ENCODE measurements at regions of chr10 and their contacts with region 1.

Region 1: DNA sequence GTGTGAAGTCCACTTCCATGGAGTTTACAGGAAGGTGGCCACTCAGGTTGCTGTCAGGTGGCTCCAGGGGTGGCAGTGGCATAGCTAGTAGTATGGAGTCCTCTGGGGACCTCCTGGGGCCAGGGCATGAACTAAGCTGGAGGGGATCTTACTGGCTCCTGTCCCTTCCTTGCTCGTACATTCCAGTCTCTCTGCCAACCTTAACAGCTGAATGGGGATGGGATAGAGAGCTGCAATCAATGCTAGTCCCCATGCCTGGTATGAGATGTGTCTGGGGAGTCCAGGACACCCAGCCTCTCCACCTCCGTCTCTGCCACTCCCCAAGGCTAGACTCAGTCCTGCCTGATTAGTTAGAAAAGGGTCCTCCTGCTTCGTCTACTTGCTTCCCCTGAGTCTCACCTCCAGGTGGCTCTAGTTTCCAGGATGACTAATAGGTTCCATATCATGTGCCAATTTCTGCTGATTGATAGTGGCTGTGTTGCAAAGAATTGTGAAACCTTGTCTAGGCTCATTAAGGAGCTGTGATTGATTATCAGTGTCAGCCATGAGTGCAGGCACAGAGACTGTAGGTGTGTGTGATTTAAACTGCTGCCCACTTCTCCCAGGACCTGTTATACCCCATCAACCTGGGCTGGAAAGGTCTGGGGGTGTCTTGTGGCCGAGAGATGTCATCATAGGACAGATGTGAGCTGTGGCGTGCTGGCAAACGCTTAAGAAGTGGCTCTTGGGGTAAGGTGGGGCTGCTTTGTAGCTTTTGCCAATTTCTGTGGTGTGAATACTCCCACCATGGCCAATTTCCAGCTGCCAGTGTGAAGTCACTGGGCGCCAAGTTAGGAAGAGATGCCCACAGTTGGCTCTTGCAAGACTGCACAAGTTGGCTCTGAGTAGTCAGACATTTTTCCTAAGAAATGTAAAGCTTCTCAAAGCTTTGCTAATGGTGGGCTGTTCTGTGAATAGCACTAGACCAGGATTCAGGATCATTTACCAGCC is 59.8 kb downstream of the COL13A1 start:
- DNase-seq: no peak
- H3K4me3 ChIP-seq: no peak overlapping the region
- H3K27ac ChIP-seq: no peak overlapping the region
- H3K4me1 ChIP-seq: no peaks in the 10 kb centered on the region
- H3K27me3 ChIP-seq: no peaks in the 10 kb centered on the region
- CTCF ChIP-seq: peak in 1 of 3 donors; percentile 14
- POLR2A ChIP-seq: no peak

Region 2: GRCh38 chr10:69682955-69683474 is 178.5 kb before region 1 on chr10:
- intact Hi-C with region 1: loop called (anchors 2 kb)
- DNase-seq: no peak
- H3K4me3 ChIP-seq: no peak overlapping the region
- H3K27ac ChIP-seq: no peak overlapping the region
- H3K4me1 ChIP-seq: no peaks in the 10 kb centered on the region
- H3K27me3 ChIP-seq: no peaks in the 10 kb centered on the region
- CTCF ChIP-seq: no peak
- POLR2A ChIP-seq: no peak